HEK293 (cell line): ENCODE measurements at regions of chr17 and their contacts with region 1.

Region 1: GRCh38 chr17:39621523-39622379 is 5.0 kb upstream of the PPP1R1B start:
- H3K4me3 ChIP-seq: no peak overlapping the region
- H3K27ac ChIP-seq: no peak overlapping the region
- H3K4me1 ChIP-seq: peaks cover 4% of the 10 kb centered on the region
- CTCF ChIP-seq: peak; percentile 99

Region 2: DNA sequence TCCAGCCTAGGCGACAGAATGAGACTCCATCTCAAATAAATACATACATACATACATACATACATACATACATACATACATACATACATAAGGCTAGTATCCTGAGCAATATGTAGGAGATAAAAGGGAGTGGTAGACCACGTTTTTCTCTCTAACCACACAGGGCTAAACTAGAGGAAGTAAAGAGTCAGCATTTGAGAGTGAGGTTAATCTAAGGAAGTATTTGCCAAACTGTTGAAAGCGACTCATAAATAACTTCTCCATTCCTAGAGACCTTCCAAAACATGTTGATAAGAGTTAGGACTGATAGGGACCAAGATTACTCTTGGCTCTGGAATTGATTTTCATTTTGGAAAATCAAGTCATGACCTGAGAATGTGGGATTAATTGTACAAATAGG is 82.9 kb before region 1 on chr17:
- CTCF ChIA-PET with region 1: interaction called, 475 read pairs
- POLR2A ChIA-PET with region 1: no interaction called
- H3K4me3 ChIP-seq: no peak overlapping the region
- H3K27ac ChIP-seq: no peak overlapping the region
- H3K4me1 ChIP-seq: no peaks in the 10 kb centered on the region
- CTCF ChIP-seq: no peak

Region 3: GRCh38 chr17:39581759-39582460 is 39.8 kb before region 1 on chr17:
- CTCF ChIA-PET with region 1: interaction called, 24 read pairs
- POLR2A ChIA-PET with region 1: interaction called, 9 read pairs
- H3K4me3 ChIP-seq: no peak overlapping the region
- H3K27ac ChIP-seq: no peak overlapping the region
- H3K4me1 ChIP-seq: no peaks in the 10 kb centered on the region
- CTCF ChIP-seq: no peak

Region 4: DNA sequence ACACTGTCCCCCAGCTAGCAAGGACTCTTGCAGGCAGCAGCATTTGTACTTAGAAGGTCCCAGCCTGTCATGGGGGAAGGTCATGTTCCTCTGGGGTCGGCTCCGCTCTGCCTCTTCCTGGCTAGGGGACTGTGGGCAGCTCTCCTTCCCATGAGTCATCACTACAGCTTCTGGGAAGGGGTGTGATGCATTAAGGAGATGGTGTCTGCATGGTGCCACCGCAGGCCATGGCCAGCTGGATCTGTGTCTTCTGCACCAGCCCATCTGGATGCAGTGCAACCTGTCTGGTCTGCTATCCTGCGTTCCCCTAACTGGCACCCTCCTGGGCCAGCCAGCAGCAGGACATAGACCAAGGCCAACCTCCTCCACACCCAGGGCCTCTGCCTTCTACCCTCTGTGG is 21.5 kb after region 1 on chr17:
- CTCF ChIA-PET with region 1: interaction called, 311 read pairs
- POLR2A ChIA-PET with region 1: no interaction called
- H3K4me3 ChIP-seq: no peak overlapping the region
- H3K27ac ChIP-seq: no peak overlapping the region
- H3K4me1 ChIP-seq: peaks cover 19% of the 10 kb centered on the region
- CTCF ChIP-seq: no peak

Region 5: DNA sequence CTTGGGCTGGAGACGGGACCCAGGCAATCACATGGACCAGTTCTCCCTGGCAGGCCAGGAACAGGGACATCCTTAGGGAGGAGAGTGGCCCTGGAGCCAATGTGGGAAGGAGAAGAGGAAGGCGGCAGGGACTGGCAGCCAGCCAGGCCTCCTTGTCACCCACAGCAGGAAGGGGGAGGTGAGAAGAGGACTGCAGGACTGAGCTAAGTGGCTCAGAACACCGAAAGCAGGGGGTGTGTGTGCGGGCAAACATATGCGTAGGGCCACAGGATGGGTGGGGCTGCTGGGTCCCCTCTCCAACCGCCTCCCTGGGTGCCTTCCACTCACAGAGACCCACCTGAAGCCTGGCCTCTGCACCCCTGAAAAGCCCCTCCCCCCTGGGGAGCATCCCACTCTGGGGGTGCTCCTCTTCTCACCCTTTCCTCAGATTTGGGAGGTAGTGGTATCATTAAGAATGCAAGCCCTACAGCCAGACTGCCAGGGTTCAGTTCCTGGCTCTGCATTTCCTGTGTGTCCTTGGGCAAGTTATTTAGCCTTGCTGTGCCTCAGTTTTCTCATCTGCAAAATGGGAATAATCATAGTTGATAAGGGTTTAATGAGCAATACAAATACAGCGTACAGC is 54.6 kb after region 1 on chr17:
- CTCF ChIA-PET with region 1: interaction called, 168 read pairs
- POLR2A ChIA-PET with region 1: interaction called, 3 read pairs
- H3K4me3 ChIP-seq: no peak overlapping the region
- H3K27ac ChIP-seq: peak overlapping the region; percentile 48
- H3K4me1 ChIP-seq: peaks cover 17% of the 10 kb centered on the region
- CTCF ChIP-seq: no peak

Region 6: DNA sequence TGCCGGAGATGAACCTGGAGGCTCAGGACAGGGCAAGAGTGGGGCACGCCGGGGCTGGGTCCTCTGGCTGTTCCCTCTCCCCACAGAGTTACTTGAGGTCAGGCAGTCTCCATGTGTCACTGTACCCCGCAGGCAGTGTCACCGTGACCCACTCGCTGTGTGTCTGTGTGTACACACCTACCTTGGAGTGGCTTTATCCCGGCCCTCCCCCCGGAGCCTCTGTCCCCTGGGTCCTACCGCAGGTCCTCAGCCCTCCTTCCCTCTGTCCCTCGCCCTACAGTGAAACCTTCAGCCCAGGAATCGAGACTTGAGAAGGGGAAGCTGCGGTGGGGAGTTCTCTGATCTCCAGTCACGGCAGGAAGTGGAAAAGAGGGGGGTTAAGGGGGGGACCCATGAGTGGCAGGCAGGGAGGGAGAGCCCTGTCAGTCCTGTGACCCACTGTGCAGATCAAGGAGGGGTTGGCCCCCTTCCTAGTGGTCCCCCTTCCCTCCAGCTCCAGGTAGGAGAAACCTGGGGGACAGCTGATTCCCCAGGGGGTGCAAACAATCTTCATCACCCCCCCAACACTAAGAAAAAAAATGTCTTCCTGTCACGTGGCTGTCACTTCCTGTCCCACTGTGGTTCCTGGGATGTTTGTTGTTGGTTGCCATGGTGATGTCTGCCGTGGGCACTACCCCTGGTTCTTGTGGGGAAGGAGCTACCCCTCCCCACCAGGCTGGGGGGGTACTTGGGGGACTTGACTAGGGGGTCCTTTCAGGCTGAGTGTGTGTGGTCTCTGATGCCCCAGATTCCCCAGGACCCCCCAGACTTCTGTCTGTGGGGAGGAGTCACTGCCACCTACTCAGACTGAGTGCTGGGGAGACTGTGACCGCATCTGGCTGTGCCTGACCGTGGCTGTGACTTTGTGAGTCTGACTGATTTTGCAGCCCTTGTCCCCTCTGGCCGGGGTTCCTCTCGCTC is 700.9 kb after region 1 on chr17:
- CTCF ChIA-PET with region 1: no interaction called
- POLR2A ChIA-PET with region 1: no interaction called
- H3K4me3 ChIP-seq: no peak overlapping the region
- H3K27ac ChIP-seq: peak overlapping the region; percentile 61
- H3K4me1 ChIP-seq: peaks cover 34% of the 10 kb centered on the region
- CTCF ChIP-seq: no peak